T-cell (primary cell): ENCODE measurements at regions of chr12 and their contacts with region 1.

Region 1: DNA sequence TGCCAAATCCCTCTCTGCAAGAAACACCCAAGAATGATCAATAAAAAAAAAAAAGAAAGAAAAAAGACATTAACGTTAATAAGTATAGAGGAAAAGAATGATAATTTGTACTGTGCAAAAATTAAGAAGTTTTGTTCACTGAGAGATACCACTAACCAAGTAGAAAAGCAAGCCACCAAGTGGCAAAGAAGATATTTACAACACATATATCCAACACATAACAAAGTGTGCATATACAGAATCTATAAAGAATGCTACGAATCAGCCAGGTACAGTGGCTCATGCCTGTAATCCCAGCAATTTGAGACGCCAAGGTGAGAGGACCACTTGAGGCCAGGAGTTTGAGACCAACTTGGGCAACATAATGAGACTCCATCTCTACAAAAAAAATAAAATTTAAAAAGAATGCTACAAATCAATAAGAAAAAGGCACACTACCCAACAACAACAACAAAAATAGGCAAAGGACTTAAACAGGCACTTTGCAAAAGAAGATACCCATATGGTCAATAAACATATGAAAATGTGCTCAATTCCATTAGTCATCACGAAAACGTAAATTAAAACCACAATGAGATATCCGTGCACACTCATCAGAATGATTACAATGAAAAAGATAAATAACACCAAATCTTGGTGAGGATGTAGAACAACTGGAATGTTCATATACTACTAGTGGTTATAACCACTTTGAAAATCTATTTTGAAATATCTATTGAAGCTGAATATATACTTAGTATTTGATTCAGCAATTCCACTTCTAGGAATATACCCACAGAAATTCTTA is 19.8 kb downstream of the GALNT4 start:
- DNase-seq: no peak
- ATAC-seq: no peak
- H3K4me3 ChIP-seq: no peak overlapping the region
- H3K4me3 Mint-ChIP-seq: no peak overlapping the region
- H3K27ac ChIP-seq: no peak overlapping the region
- H3K27ac Mint-ChIP-seq: no peak overlapping the region
- H3K4me1 ChIP-seq: peaks cover 0 to 2% of the 10 kb centered on the region in 2 experiments
- H3K4me1 Mint-ChIP-seq: peaks cover 15 to 18% (median 15%) of the 10 kb centered on the region in 3 donors
- H3K27me3 ChIP-seq: no peaks in the 10 kb centered on the region
- H3K27me3 Mint-ChIP-seq: no peaks in the 10 kb centered on the region

Region 2: DNA sequence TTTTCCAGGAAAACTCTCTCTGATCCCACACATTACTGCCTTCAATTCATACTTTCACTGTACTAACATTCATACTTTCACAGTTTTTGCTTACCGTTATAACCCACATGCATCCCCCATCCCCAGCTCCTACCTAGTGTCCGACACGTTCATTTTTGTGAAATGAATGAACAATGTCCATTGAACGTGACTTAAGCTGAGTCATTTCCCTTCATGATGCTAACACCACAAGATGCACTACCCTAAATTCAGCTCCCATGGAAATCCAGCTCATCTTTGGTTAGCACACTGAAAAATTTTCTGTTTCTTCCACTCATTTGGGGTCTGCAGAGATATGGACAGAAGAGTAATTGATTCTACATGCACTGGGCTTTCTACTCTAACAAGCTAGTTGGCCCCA is 64.8 kb before region 1 on chr12:
- CTCF ChIA-PET with region 1: no interaction called
- POLR2A ChIA-PET with region 1: interaction called in 1 of 2 experiments, 10 read pairs
- DNase-seq: no peak
- ATAC-seq: no peak
- H3K4me3 ChIP-seq: no peak overlapping the region
- H3K4me3 Mint-ChIP-seq: no peak overlapping the region
- H3K27ac ChIP-seq: no peak overlapping the region
- H3K27ac Mint-ChIP-seq: no peak overlapping the region
- H3K4me1 ChIP-seq: peaks cover 0 to 6% of the 10 kb centered on the region in 2 experiments
- H3K4me1 Mint-ChIP-seq: peaks cover 21 to 26% (median 22%) of the 10 kb centered on the region in 3 donors
- H3K27me3 ChIP-seq: no peaks in the 10 kb centered on the region
- H3K27me3 Mint-ChIP-seq: no peaks in the 10 kb centered on the region

Region 3: DNA sequence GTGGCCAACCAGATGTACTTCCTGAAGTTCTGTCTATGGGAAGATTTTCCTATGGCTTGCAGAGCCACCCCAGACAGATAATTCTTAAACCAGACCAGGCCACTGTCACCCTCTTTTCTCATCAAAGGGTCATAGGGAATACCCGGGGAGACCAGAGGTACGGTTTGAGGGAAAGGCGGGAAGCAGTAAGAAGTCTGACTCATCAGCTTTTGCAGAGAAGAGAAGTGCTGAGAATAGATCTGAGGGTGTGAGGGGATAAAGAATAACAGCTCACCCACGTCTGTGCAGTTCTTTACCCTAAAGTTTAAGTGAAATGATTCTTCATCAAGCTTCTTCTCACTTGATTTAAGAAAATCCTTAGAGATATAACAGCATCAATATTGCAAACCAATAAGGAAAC is 42.3 kb after region 1 on chr12:
- CTCF ChIA-PET with region 1: no interaction called
- POLR2A ChIA-PET with region 1: no interaction called
- DNase-seq: no peak
- ATAC-seq: no peak
- H3K4me3 ChIP-seq: no peak overlapping the region
- H3K4me3 Mint-ChIP-seq: no peak overlapping the region
- H3K27ac ChIP-seq: no peak overlapping the region
- H3K27ac Mint-ChIP-seq: no peak overlapping the region
- H3K4me1 ChIP-seq: peaks cover 0 to 2% of the 10 kb centered on the region in 2 experiments
- H3K4me1 Mint-ChIP-seq: peaks cover 4 to 9% (median 7%) of the 10 kb centered on the region in 3 donors
- H3K27me3 ChIP-seq: no peaks in the 10 kb centered on the region
- H3K27me3 Mint-ChIP-seq: peaks cover 2 to 6% of the 10 kb centered on the region in 2 donors